ENCODE measurements at regions of chr6 and their contacts with region 1.

Region 1: GRCh38 chr6:111850295-111850937 is 22.8 kb downstream of the FYN start:
- DNase-seq: no peak
- ATAC-seq: no peak
- H3K4me3 Mint-ChIP-seq: peak overlapping the region; percentile 23
- H3K27ac Mint-ChIP-seq: peak overlapping the region; percentile 63
- H3K4me1 Mint-ChIP-seq: peaks cover 64% of the 10 kb centered on the region
- H3K27me3 Mint-ChIP-seq: no peaks in the 10 kb centered on the region

Region 2: GRCh38 chr6:111861431-111861885 is 11.0 kb after region 1 on chr6:
- POLR2A ChIA-PET with region 1: interaction called, 11 read pairs
- DNase-seq: no peak
- ATAC-seq: no peak
- H3K4me3 Mint-ChIP-seq: no peak overlapping the region
- H3K27ac Mint-ChIP-seq: no peak overlapping the region
- H3K4me1 Mint-ChIP-seq: peaks cover 78% of the 10 kb centered on the region
- H3K27me3 Mint-ChIP-seq: no peaks in the 10 kb centered on the region

Measured in activated naive CD8-positive, alpha-beta T cell treated with anti-CD3 and anti-CD28 coated beads, Interleukin-2, amount 10 ng/mL, durations not matched to agents 7 days and 5 days (primary cell).